ENCODE measurements at regions of chr4 and their contacts with region 1.

Region 1: GRCh38 chr4:77156533-77156911 is 485 bp upstream of the CCNG2 start:
- DNase-seq: peak; percentile 98
- ATAC-seq: peak; percentile 97
- H3K4me3 Mint-ChIP-seq: peak overlapping the region; percentile 84
- H3K27ac Mint-ChIP-seq: peak overlapping the region; percentile 93
- H3K4me1 Mint-ChIP-seq: peaks cover 56% of the 10 kb centered on the region
- H3K27me3 Mint-ChIP-seq: no peaks in the 10 kb centered on the region

Region 2: GRCh38 chr4:77052352-77052751 is 104.2 kb before region 1 on chr4:
- CTCF ChIA-PET with region 1: interaction called, 12 read pairs
- POLR2A ChIA-PET with region 1: interaction called, 3 read pairs
- DNase-seq: peak; percentile 72
- ATAC-seq: peak; percentile 60
- H3K4me3 Mint-ChIP-seq: no peak overlapping the region
- H3K27ac Mint-ChIP-seq: no peak overlapping the region
- H3K4me1 Mint-ChIP-seq: no peaks in the 10 kb centered on the region
- H3K27me3 Mint-ChIP-seq: no peaks in the 10 kb centered on the region

Region 3: DNA sequence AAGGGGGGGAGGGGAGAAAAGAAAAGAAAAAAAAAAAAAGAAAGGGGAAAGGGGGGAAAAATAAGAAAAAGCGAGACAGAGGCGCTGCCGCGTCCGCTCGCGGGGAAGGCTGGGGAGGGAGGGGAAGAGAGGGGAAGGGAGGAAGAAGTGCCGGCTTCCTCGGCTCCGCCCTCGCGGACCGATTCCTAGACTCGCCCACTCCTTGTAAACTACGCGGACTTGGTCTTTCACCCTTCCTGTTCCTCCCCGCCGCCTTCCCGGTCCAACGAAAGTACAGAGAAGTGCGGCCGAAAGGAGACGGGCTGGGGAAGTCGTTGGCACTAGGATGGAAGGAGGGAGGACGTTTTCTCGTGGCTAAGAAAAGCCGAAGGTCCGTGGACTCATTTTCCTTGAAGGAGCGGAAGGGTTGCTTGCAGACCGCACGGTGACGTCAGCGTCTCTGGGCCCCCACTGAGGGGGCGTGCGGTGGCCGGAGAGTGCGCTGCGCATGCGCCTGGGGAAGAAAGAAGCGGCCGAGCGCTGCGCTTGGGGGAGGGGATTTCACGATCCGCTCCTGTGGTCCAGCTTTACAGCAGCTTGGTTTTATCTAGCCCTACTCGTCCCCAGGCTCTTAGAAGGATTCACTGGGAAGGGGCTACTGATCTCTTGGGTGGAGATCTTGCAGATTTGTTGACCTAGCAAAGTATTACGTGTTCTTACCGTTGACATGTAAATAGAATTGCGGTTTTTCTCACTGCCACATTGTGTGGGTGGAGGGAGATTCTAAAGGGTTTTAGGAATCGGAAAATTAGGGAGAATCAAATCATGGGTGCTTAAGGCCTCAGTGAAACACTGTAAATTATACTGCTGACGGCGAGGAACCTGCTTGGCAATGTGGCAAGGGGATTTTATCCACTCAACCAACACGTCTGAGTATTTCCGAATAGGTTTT is 80.4 kb before region 1 on chr4 and contains the start of gene CCNI:
- CTCF ChIA-PET with region 1: interaction called, 7 read pairs
- POLR2A ChIA-PET with region 1: interaction called, 73 read pairs
- DNase-seq: peak; percentile 95
- ATAC-seq: peak; percentile 83
- H3K4me3 Mint-ChIP-seq: no peak within 1 kb of the TSS
- H3K27ac Mint-ChIP-seq: peak within 1 kb of the TSS; percentile 100
- H3K4me1 Mint-ChIP-seq: peaks cover 38% of the 10 kb centered on the region
- H3K27me3 Mint-ChIP-seq: no peaks in the 10 kb centered on the region
- total RNA-seq, gene CCNI: 203 to 216 TPM

Region 4: GRCh38 chr4:77146186-77147078 is 10.1 kb before region 1 on chr4:
- CTCF ChIA-PET with region 1: interaction called, 7 read pairs
- POLR2A ChIA-PET with region 1: interaction called, 27 read pairs
- DNase-seq: no peak
- ATAC-seq: peak; percentile 27
- H3K4me3 Mint-ChIP-seq: no peak overlapping the region
- H3K27ac Mint-ChIP-seq: peak overlapping the region; percentile 51
- H3K4me1 Mint-ChIP-seq: peaks cover 21% of the 10 kb centered on the region
- H3K27me3 Mint-ChIP-seq: no peaks in the 10 kb centered on the region

Region 5: DNA sequence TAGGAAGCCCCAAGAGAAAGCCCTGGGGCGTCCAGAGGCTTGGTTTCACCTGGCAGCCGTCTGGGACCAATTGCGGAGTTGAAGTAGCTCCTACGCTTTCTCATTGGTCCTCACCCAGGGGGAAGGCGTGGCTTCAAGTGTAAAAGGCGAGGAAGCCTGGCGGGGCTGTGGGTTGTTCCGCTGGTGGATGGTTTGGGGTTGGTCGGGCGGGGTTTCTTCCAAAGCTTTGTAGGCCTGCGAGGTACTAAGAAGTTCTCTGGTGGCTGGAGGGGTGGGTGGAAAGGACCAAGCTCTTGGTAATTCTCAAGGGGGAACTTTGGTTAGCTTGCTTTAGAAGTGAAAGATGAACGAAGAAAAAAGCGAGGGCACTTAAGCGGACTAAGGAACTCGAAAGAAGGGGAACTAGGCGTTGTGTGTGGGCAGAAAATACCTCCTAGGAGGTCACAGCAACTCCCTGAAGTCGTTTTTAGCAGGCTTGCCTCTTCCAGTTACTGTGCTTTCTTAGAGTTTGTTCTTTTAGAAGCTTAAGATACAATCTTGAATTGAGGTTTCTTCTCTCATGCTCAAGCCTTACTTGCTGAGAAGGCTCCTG is 37.1 kb after region 1 on chr4:
- CTCF ChIA-PET with region 1: interaction called, 6 read pairs
- POLR2A ChIA-PET with region 1: interaction called, 15 read pairs
- DNase-seq: peak; percentile 82
- ATAC-seq: peak; percentile 99
- H3K4me3 Mint-ChIP-seq: peak overlapping the region; percentile 71
- H3K27ac Mint-ChIP-seq: peak overlapping the region; percentile 82
- H3K4me1 Mint-ChIP-seq: peaks cover 20% of the 10 kb centered on the region
- H3K27me3 Mint-ChIP-seq: peaks cover 3% of the 10 kb centered on the region